ACHN (cell line): ENCODE measurements at regions of chr16 and their contacts with region 1.

Region 1: DNA sequence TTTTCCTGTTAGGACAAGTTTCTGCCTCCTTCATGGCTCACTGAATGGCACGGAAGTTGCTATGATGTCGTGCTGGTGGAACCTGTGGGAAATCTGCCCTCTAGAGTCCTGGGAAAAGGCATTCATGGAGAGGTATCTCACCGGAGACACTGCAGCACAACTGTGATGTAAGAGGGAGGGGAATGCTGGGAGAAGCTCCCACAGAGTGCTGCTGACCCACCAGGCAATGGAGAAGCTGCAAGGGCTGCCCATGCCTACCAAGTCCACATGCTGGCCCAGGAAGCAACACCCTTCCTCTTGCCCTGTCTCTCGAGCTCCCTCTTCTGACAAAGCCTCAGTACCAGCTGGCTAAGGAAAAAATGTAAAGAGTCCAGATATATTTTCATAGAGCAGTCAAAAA is 45.2 kb upstream of the SLC5A11 start:
- DNase-seq: peak; percentile 89

Region 2: GRCh38 chr16:24568392-24568791 is 232.2 kb before region 1 on chr16:
- in situ Hi-C with region 1: loop called (anchors 25 kb)
- DNase-seq: peak; percentile 55

Region 3: GRCh38 chr16:24838554-24839266 is 38.1 kb after region 1 on chr16:
- in situ Hi-C with region 1: no loop called
- DNase-seq: peak; percentile 54

Region 4: GRCh38 chr16:24869033-24869432 is 68.4 kb after region 1 on chr16:
- in situ Hi-C with region 1: no loop called
- DNase-seq: no peak